Mammary epithelial cell (primary cell): ENCODE measurements at regions of chr4 and their contacts with region 1.

Region 1: DNA sequence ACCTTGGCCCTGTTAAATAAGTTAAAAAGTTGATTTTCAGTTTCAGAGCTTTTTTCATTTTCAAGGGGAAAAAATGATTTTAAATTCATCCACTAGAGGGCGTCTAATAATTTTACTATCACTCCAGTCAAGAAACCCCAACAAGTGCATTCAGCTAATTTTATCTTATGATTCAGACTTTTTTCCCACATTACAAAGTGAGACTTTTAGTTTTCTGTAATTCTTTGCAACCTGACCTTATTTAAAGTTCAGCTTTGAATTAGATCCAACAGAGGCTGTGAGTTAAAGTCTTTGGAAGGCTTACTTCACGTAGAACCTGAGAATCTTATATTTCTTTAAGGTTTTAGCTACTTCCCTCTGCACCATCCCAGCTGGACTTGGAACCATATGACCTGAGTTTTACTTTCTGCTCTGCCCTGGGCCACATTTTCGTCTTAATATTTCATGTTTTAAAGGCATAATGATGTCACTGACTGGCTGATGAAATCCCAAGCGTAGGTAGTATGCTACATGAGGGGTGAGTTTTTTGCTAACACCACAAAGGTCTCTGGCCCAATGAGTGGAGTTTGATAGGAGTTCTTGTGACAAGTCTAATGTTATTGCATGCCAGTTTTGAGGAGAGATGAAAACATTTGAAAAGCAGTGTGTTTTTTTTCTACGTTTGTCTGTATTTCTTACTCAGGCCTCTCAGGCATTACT is 7.2 kb downstream of the GNRHR start:
- DNase-seq: peak; percentile 43
- H3K4me3 ChIP-seq: no peak overlapping the region
- H3K27ac ChIP-seq: no peak overlapping the region
- H3K4me1 ChIP-seq: peaks cover 24% of the 10 kb centered on the region
- H3K27me3 ChIP-seq: no peaks in the 10 kb centered on the region
- CTCF ChIP-seq: peak; percentile 34 to 48

Region 2: DNA sequence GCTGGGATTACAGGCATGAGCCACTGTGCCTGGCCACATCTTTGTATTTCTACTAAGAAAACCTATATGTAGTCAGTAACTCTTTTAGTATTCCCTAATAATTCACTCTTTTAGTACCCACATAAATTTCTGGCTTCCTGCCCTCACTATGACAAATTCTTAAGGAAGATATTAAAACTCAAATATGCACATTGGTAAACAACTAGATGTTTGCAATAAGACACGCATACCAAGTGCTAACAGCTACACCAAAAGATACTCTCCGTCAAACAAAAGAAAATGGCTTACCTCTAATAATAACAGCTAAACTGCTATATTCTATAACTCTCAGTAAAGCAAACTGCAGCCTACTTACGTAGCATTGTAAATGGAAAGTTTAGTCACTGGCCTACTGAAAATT is 52.3 kb before region 1 on chr4:
- CTCF ChIA-PET with region 1: interaction called, 10 read pairs
- dilution Hi-C with region 1: no loop called
- in situ Hi-C with region 1: no loop called
- intact Hi-C with region 1: no loop called
- DNase-seq: no peak
- H3K4me3 ChIP-seq: no peak overlapping the region
- H3K27ac ChIP-seq: no peak overlapping the region
- H3K4me1 ChIP-seq: peaks cover 8% of the 10 kb centered on the region
- H3K27me3 ChIP-seq: no peaks in the 10 kb centered on the region
- CTCF ChIP-seq: no peak

Region 3: DNA sequence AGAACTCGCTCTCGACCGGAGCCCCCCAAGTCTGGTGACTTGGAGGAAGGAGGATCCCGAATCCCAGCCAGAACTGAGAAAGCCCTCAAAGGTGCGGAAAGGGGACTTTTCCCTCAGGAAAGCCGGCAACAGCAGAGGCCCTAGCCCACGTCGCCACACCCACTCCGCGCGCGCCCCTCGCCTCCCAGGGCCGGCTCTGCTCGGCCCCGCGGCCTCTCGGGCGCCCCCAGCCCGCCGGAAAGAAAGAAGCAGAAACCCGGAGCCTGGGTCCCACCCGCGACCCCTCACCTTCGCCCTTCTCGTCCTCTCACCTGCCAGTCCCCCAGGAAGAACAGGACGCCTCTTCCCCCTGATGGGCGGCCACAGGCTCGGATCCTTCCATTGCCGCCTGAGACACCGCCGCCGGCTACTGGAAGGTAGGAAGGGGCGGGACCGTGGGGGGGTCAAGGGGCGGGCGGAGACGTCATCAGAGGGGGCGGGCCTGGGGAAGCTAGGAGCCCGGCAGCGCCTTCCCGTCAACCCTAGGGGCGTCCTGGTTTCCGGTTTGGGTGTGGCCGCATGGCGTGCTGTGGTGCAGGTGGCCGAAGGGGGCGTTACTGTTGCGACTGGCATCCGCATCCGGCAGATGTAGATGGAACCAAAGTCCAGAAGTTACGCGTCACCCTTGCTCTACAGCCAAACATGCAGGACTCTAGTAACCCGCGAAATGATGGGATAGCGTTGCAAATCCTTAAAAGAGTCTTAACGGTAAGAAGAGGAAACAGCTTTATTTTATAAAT is 46.0 kb before region 1 on chr4 and contains the start of gene UBA6:
- CTCF ChIA-PET with region 1: no interaction called
- dilution Hi-C with region 1: no loop called
- in situ Hi-C with region 1: no loop called
- intact Hi-C with region 1: loop called (anchors 1 kb)
- DNase-seq: peak; percentile 96
- H3K4me3 ChIP-seq: peak within 1 kb of the TSS; percentile 68 to 88 (median 86)
- H3K27ac ChIP-seq: peak within 1 kb of the TSS; percentile 96
- H3K4me1 ChIP-seq: peaks cover 18% of the 10 kb centered on the region
- H3K27me3 ChIP-seq: no peaks in the 10 kb centered on the region
- CTCF ChIP-seq: peak in 1 of 2 donors; percentile 50
- total RNA-seq, gene UBA6: 178 to 203 TPM

Region 4: DNA sequence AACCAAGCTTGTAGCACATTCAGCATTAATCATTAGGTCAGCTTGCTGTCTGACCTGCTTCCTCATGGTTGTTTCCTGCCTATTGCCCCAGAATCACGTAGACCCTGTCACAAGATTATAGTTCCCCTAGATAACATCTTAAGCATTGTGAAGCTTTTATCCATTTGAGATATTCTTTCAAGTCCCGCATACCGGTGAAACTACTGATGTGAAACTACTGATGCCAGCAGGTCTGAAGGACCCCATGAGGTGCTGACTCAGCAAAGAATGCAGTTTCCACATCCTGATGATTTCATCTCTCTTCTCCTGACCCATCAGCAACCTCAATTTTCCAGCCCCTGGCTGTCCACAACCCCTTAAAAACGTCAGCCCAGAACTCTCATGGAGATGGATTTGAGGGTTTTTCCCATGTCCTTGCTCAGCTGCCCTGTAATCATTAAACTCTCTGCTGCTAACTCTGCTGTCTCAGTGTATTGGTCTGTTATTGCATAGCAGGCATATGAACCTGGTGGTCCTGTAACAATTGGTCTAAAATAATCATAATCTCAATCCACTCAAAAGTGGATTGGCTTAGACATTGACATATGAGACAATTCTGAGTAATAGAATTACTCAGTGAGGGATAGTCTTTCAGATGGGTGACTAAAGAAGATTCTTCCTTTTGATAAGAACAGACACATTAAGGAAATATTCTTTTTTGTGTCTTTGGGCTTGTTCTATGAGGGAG is 19.7 kb before region 1 on chr4:
- CTCF ChIA-PET with region 1: interaction called, 5 read pairs
- dilution Hi-C with region 1: no loop called
- in situ Hi-C with region 1: no loop called
- intact Hi-C with region 1: loop called (anchors 2 kb)
- DNase-seq: peak; percentile 92
- H3K4me3 ChIP-seq: no peak overlapping the region
- H3K27ac ChIP-seq: peak overlapping the region; percentile 92
- H3K4me1 ChIP-seq: peaks cover 52% of the 10 kb centered on the region
- H3K27me3 ChIP-seq: no peaks in the 10 kb centered on the region
- CTCF ChIP-seq: no peak

Region 5: GRCh38 chr4:67885762-67886161 is 138.8 kb after region 1 on chr4:
- CTCF ChIA-PET with region 1: no interaction called
- dilution Hi-C with region 1: no loop called
- in situ Hi-C with region 1: no loop called
- intact Hi-C with region 1: no loop called
- DNase-seq: peak; percentile 98
- H3K4me3 ChIP-seq: no peak overlapping the region
- H3K27ac ChIP-seq: peak overlapping the region; percentile 88
- H3K4me1 ChIP-seq: peaks cover 16% of the 10 kb centered on the region
- H3K27me3 ChIP-seq: no peaks in the 10 kb centered on the region
- CTCF ChIP-seq: no peak

Region 6: DNA sequence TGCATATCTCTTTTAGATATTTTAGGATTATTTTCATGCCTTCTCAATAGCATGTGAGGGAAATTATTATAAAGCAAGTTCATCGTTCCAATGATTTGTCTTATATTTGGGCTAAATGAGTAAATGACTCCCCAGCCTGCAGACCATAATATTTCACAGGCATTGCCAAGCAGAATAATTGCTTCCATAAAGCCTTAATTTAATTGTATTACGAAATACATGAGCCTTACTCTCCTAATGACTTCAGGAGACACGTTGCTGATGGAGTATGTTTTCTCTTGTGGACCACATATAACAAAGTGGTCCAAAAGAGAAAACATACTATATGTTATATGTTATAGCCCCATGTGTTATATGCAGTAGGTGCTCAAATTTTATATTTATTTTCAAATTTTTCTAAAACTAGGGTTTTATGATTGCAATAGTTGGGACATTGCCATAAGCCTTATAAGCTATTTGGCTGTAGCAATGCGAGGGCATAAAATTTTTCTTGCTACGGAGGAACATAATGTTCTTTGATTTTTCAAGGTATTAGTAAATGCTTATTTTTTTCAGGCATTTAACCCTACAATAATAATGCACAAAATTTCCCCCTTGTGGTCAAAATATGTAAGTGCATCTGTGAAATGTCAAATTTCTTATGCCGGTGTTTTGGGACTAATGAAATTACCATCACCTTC is 163.1 kb after region 1 on chr4:
- CTCF ChIA-PET with region 1: interaction called, 3 read pairs
- dilution Hi-C with region 1: no loop called
- in situ Hi-C with region 1: no loop called
- intact Hi-C with region 1: loop called (anchors 10 kb)
- DNase-seq: peak; percentile 17
- H3K4me3 ChIP-seq: no peak overlapping the region
- H3K27ac ChIP-seq: no peak overlapping the region
- H3K4me1 ChIP-seq: no peaks in the 10 kb centered on the region
- H3K27me3 ChIP-seq: no peaks in the 10 kb centered on the region
- CTCF ChIP-seq: peak; percentile 54 to 71